CD8-positive, alpha-beta memory T cell (primary cell): ENCODE measurements at regions of chr3 and their contacts with region 1.

Region 1: GRCh38 chr3:195116407-195117185 is 154.4 kb downstream of the XXYLT1 start:
- DNase-seq: no peak
- H3K4me3 ChIP-seq: no peak overlapping the region
- H3K4me3 Mint-ChIP-seq: no peak overlapping the region
- H3K27ac ChIP-seq: no peak overlapping the region
- H3K27ac Mint-ChIP-seq: peak overlapping the region in 3 of 8 donors; percentile 26 to 49 (median 43)
- H3K4me1 ChIP-seq: peaks cover 5% of the 10 kb centered on the region
- H3K4me1 Mint-ChIP-seq: no peaks in the 10 kb centered on the region
- H3K27me3 ChIP-seq: no peaks in the 10 kb centered on the region
- H3K27me3 Mint-ChIP-seq: no peaks in the 10 kb centered on the region

Region 2: GRCh38 chr3:195106418-195106906 is 10.1 kb before region 1 on chr3:
- CTCF ChIA-PET with region 1: interaction called, 10 read pairs
- POLR2A ChIA-PET with region 1: no interaction called
- DNase-seq: peak; percentile 56 to 75 (median 59)
- H3K4me3 ChIP-seq: peak overlapping the region; percentile 31
- H3K4me3 Mint-ChIP-seq: peak overlapping the region in 5 of 7 donors; percentile 34 to 70 (median 49)
- H3K27ac ChIP-seq: no peak overlapping the region
- H3K27ac Mint-ChIP-seq: peak overlapping the region in 1 of 8 donors; percentile 73
- H3K4me1 ChIP-seq: no peaks in the 10 kb centered on the region
- H3K4me1 Mint-ChIP-seq: peaks cover 5 to 8% (median 7%) of the 10 kb centered on the region in 3 donors
- H3K27me3 ChIP-seq: no peaks in the 10 kb centered on the region
- H3K27me3 Mint-ChIP-seq: no peaks in the 10 kb centered on the region